ENCODE measurements at regions of chr3 and their contacts with region 1.

Region 1: DNA sequence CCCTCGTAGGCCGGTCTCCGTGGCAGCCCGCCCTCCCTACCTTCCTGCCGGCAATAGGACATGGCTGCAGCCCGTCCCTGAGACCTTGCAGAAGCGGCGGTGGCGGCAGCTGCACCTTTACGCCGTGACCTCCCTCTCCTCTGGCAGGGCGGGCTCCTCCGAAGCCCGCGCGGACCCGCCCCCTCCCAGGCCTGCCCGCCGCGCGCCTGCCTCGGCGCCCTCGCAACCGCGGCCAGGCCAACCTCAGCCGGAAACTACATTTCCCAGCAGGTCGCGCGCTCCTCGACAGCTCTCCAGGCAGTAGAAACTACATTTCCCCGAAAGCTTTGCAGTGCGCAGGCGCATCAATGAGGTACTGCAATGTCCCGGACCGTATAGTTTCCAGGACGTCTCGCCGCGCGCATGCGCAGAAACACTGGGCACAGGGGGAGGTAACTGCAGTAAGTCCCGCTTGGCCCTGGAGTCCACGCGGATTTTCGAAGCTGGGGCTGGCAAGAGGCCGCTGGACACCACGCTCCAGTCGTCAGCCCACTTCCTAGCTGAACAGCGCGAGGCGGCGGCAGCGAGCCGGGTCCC is at the starts of genes CHCHD4 and TMEM43:
- DNase-seq: peak; percentile 99 to 100
- ATAC-seq: peak; percentile 77 to 80
- H3K4me3 ChIP-seq: peak within 1 kb of the TSS; percentile 68 to 91 (median 72)
- H3K27ac ChIP-seq: peak within 1 kb of the TSS; percentile 92 to 98 (median 94)
- H3K4me1 ChIP-seq: peaks cover 33 to 41% of the 10 kb centered on the region in 2 donors
- H3K27me3 ChIP-seq: no peaks in the 10 kb centered on the region
- CTCF ChIP-seq: peak in 1 of 5 experiments; percentile 11
- POLR2A ChIP-seq: peak; percentile 90 to 92
- total RNA-seq, gene CHCHD4: 16.2 to 49.4 (median 22.8) TPM
- total RNA-seq, gene TMEM43: 68.2 to 128 (median 78.6) TPM

Region 2: GRCh38 chr3:13479581-13480339 is 644.9 kb before region 1 on chr3 and contains the start of gene HDAC11:
- in situ Hi-C with region 1: loop called in 1 of 4 experiments (anchors 25 kb)
- intact Hi-C with region 1: loop called (anchors 10 kb)
- DNase-seq: peak; percentile 99
- ATAC-seq: peak; percentile 80 to 82
- H3K4me3 ChIP-seq: peak within 1 kb of the TSS; percentile 78 to 81 (median 79)
- H3K27ac ChIP-seq: peak within 1 kb of the TSS; percentile 93 to 98 (median 95)
- H3K4me1 ChIP-seq: peaks cover 45 to 49% of the 10 kb centered on the region in 2 donors
- H3K27me3 ChIP-seq: no peaks in the 10 kb centered on the region
- CTCF ChIP-seq: peak in 4 of 5 experiments; percentile 50 to 66 (median 56)
- POLR2A ChIP-seq: peak; percentile 90 to 95
- total RNA-seq, gene HDAC11: 13.0 to 40.4 (median 15.8) TPM

Region 3: GRCh38 chr3:13612829-13613228 is 511.9 kb before region 1 on chr3:
- in situ Hi-C with region 1: no loop called
- intact Hi-C with region 1: no loop called
- DNase-seq: peak; percentile 77 to 86
- ATAC-seq: peak; percentile 82 to 89
- H3K4me3 ChIP-seq: no peak overlapping the region
- H3K27ac ChIP-seq: peak overlapping the region in 3 of 4 donors; percentile 7 to 52 (median 31)
- H3K4me1 ChIP-seq: no peaks in the 10 kb centered on the region
- H3K27me3 ChIP-seq: no peaks in the 10 kb centered on the region
- CTCF ChIP-seq: no peak
- POLR2A ChIP-seq: no peak

Region 4: DNA sequence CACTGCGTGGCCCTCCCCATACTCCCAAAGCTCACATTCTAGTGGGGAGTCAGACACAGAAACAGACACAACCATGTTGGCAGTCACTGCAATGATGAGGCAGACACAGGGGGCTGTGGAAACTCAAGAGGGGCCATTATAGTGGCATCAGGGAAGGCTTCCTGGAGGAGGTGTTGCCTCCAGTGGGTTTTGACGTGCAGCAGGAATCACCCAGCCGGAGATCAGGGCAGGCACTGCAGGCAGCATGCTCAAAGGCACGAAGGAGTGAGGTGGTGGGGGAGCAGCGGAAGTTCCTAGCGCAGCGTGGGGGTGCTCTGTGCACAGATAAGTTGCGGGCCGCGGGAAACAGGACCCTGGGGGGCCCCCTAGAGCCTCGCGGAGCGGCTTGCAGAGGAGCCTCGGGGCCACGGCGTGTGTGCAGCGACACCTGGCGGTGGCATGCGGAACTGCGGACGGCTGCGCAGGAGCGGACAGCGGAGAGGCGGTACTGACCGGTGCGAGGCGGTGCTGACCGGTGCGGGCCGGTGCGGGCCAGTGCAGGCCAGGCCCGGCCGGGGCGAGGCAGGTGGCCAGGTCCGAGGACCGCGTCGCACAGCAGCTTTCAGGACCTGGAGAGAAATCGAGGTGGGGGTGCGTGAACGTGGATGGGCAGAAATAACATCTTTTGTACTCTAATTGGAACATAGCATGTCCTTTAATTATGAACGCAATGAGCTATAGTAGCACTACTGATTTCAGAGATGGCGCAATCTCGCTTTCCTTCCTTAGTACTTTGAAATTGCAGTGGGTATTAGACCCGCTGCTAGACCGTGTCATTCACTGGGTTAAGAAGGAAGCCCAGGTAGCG is 474.3 kb before region 1 on chr3:
- in situ Hi-C with region 1: no loop called
- intact Hi-C with region 1: no loop called
- DNase-seq: peak; percentile 18 to 54
- ATAC-seq: peak; percentile 46 to 69
- H3K4me3 ChIP-seq: no peak overlapping the region
- H3K27ac ChIP-seq: no peak overlapping the region
- H3K4me1 ChIP-seq: peaks cover 7 to 8% of the 10 kb centered on the region in 2 donors
- H3K27me3 ChIP-seq: peaks cover 0 to 10% (median 5%) of the 10 kb centered on the region in 3 donors
- CTCF ChIP-seq: peak; percentile 92 to 99 (median 98)
- POLR2A ChIP-seq: no peak

Region 5: DNA sequence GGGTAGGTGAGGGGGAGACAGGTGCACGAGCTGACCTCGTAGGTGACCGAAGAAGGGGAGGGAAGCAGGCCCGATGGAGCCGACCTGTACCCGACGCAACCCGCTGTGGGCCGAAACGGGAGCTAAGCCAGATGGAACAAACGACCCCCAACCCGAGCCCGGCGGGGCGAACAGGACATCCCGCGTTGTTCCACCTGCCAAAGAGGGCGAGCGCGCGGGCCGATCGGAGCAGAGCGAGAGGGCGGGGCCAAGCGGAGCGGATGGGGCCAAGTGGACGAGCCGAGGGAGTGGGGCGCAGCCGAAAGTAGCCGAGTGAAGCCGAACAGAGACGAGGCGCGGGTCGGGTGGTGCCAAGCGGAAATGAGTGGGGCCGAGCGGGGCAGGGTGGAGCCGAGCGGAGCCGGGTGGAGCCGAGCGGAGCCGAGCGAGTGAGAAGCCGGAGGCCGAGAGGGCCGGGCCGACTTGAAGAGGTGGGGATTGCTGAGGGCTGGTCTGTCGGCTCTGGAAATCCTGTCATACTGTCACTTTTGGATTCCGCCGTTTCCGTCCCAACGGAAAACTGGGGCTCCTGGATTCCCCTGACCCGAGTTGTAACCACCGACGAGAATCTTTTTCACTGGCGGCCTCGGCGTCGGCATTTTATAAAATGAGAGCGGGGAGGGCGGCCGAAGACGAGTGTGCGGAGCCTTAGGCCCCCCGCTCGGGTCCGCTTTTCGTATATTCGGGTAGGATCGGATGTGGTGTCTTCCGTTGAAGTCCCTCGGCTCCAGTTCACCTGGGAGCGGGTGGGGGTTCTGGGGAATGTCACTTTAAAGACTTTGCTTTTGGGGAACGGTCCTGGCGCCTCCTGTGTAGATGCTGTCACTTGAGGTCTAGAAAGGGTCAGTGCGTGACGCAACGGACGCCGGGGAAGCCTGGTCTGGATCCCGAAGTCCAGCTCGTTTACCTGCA is 229.3 kb before region 1 on chr3:
- in situ Hi-C with region 1: loop called in 2 of 4 experiments (anchors 10 kb)
- intact Hi-C with region 1: loop called (anchors 2 kb)
- DNase-seq: peak; percentile 77 to 86
- ATAC-seq: peak; percentile 88 to 89
- H3K4me3 ChIP-seq: peak overlapping the region; percentile 56 to 80 (median 66)
- H3K27ac ChIP-seq: peak overlapping the region; percentile 16 to 71 (median 49)
- H3K4me1 ChIP-seq: peaks cover 9 to 12% of the 10 kb centered on the region in 2 donors
- H3K27me3 ChIP-seq: peaks cover 0 to 2% (median 0%) of the 10 kb centered on the region in 3 donors
- CTCF ChIP-seq: no peak
- POLR2A ChIP-seq: peak; percentile 68 to 70

Region 6: DNA sequence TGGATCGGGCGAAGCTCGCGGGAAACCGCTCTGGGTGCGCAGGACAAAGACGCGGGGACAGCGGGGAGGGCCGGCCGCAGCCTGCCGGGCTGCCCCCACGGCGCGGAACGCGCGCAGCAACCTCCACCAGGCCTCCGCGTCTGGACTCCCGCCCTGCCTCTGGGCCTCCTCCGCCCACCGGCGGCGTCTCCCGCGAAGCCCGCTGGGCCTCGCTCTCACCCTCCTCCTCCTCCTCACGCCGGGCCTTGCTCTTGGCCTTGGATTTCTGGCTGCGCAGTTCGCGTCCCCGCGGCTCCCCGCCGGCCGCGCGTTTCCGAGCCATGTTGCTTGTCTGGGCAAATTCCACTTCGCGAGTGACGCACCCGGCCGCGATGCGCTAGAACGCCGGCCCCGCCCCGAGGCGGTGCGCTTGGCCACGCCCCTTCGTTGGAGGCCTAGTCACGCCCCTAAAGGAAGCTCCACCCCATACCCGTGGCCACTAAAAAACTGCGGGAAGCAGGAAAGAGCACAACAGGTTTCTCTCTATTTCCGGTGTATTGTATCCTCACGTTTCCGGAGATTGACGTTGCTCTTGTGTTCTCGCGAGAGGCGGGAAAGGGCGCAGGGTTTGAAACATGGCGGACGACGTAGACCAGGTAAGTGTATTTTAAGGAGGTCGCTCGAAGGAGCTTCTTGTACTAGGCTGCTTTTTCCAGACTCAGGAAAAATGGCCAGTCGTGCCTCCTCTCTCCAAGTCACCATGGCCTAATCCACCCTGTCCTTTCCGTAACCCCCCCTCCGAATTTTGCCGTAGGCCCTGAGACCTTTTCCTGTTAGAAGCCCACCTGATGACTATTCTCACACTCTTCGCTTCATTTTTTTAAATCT is 53.8 kb after region 1 on chr3 and contains the starts of genes LSM3 and XPC:
- in situ Hi-C with region 1: no loop called
- intact Hi-C with region 1: loop called (anchors 1 kb)
- DNase-seq: peak; percentile 96 to 97
- ATAC-seq: peak; percentile 98
- H3K4me3 ChIP-seq: peak within 1 kb of the TSS; percentile 71 to 86 (median 75)
- H3K27ac ChIP-seq: peak within 1 kb of the TSS; percentile 86 to 91 (median 90)
- H3K4me1 ChIP-seq: peaks cover 31 to 53% of the 10 kb centered on the region in 2 donors
- H3K27me3 ChIP-seq: no peaks in the 10 kb centered on the region
- CTCF ChIP-seq: no peak
- POLR2A ChIP-seq: peak; percentile 95
- total RNA-seq, gene LSM3: 11.6 to 16.8 (median 14.2) TPM
- total RNA-seq, gene XPC: 22.0 to 30.6 (median 27.0) TPM

Region 7: DNA sequence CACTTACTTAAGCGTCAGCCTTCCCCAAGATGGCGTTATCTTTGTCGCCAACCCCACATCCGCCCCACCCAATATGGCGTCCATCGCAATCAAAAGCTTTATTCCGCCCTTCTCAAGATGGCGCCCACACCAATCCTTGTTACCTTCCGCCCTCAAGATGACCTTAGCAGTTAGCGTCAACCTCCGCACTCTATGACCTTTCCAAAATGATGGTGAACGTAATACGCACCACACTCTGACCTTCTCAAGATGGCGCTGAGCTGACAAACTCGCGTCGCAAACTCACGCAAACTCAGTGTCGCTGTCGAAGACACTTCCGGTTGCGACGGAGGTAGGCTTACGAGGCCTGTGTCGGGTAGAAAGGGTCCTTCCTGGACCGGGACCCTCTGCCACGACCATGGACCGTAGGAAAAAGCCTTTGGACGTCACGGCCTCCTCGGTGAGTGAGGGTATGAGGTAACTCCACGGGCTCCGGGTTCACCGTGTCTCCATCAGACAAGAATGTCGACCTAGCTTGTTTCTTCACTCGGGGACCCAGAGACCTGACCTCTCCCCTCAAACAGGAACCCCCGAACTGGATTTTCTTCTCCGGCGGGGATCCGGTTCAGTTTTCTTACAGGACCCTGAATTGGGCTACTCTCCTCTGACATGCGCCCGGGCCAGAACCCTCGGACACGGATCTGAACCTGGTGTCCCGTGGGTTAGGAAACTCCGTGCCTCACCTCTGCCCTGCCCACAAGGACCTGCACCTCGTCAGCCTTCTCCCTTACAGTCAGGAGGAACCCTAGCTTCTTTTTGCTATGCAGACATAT is 526.9 kb after region 1 on chr3 and contains the start of gene CCDC174:
- in situ Hi-C with region 1: no loop called
- intact Hi-C with region 1: loop called (anchors 10 kb)
- DNase-seq: peak; percentile 95 to 98
- ATAC-seq: peak; percentile 99 to 100
- H3K4me3 ChIP-seq: peak within 1 kb of the TSS; percentile 67 to 85 (median 78)
- H3K27ac ChIP-seq: peak within 1 kb of the TSS; percentile 89 to 96 (median 90)
- H3K4me1 ChIP-seq: peaks cover 21 to 26% of the 10 kb centered on the region in 2 donors
- H3K27me3 ChIP-seq: no peaks in the 10 kb centered on the region
- CTCF ChIP-seq: no peak
- POLR2A ChIP-seq: peak; percentile 72 to 88
- total RNA-seq, gene CCDC174: 11.1 to 22.2 (median 14.8) TPM

Region 8: GRCh38 chr3:14947886-14948555 is 823.3 kb after region 1 on chr3:
- in situ Hi-C with region 1: no loop called
- intact Hi-C with region 1: loop called (anchors 5 kb)
- DNase-seq: peak; percentile 97
- ATAC-seq: peak; percentile 86 to 88
- H3K4me3 ChIP-seq: peak overlapping the region; percentile 66 to 98 (median 80)
- H3K27ac ChIP-seq: peak overlapping the region; percentile 96 to 99 (median 99)
- H3K4me1 ChIP-seq: peaks cover 34 to 42% of the 10 kb centered on the region in 2 donors
- H3K27me3 ChIP-seq: no peaks in the 10 kb centered on the region
- CTCF ChIP-seq: peak in 1 of 5 experiments; percentile 16
- POLR2A ChIP-seq: peak in 1 of 2 donors; percentile 1

Region 9: DNA sequence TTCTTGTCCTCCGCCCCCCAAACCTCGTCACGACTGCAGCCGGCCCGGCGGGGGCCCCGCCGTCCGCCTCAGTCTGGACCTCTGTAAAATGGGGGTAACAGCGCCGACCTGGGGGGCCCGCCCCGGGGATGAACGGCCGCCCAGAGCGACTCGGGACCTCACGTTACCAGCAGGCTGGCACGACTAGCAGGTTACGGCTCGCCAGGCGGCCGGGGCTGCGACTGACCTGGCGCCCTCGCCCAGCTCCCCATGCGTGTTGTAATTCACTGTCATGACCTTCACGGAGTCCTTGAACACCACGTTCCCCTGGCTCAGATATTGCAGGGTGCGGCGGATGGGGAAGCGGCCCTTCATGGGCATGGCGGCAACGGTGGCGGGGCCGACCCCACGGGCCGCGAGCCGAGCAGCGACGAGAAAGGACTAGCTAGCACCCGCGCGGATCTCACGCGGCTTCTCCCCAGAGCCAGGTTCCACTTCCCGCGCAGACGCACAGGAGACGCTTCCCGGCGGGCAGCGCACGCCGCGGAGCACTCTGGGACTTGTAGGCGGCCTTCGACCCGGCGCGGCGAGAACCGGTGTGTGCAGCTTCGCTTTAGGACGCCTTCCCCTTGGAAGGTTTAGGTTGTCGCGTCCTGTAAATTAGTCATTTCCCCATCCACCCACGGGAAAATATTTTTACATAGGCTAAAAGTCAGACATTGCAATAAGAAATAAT is 940.3 kb after region 1 on chr3 and contains the start of gene MRPS25:
- in situ Hi-C with region 1: loop called in 1 of 4 experiments (anchors 25 kb)
- intact Hi-C with region 1: no loop called
- DNase-seq: peak; percentile 87 to 91
- ATAC-seq: peak; percentile 93 to 94
- H3K4me3 ChIP-seq: peak within 1 kb of the TSS; percentile 74 to 99 (median 85)
- H3K27ac ChIP-seq: peak within 1 kb of the TSS; percentile 83 to 97 (median 94)
- H3K4me1 ChIP-seq: peaks cover 18 to 20% of the 10 kb centered on the region in 2 donors
- H3K27me3 ChIP-seq: no peaks in the 10 kb centered on the region
- CTCF ChIP-seq: no peak
- POLR2A ChIP-seq: peak; percentile 94
- total RNA-seq, gene MRPS25: 71.4 to 88.6 (median 73.9) TPM

Measured in gastrocnemius medialis (tissue), 4 donors.